Natural killer cell (primary cell): ENCODE measurements at regions of chr20 and their contacts with region 1.

Region 1: DNA sequence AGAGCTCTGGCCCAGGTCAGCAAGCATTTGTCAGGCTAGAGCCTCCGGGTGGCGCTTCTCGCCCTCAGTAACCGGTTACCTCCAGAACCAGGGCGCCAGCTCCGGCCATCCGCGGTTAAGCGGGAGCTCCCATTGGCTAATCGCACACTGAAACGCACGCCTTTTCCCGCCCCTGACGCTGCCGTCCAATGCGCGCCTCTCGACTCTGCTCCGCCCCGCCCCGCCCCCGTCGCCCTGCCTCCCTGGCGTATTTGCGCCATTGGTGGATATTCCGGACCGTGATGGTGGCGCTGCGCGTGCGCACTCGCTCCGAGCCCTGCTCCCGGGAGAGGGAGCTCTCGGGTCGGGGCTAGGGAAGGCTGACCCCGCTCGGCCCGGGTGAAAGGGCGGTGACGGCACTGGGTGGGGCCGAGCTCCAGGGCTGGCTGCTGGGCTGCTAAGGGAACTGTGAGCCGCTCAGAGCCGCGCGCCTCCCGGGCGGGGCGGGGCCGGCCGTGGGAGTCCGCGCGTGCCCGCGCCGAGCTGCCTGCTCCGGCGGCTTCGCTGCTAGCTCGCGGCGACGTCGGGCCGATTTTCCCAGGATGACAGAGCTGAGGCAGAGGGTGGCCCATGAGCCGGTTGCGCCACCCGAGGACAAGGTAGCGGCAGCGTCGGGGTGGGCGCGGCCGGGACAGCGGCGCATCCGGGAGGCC is at the start of gene CDS2:
- DNase-seq: peak; percentile 98 to 100
- ATAC-seq: peak; percentile 83 to 96 (median 86)
- H3K4me3 ChIP-seq: peak within 1 kb of the TSS; percentile 61
- H3K4me3 Mint-ChIP-seq: peak within 1 kb of the TSS; percentile 92
- H3K27ac ChIP-seq: peak within 1 kb of the TSS; percentile 93
- H3K27ac Mint-ChIP-seq: peak within 1 kb of the TSS; percentile 86 to 98
- H3K4me1 ChIP-seq: peaks cover 22% of the 10 kb centered on the region
- H3K4me1 Mint-ChIP-seq: peaks cover 27 to 31% of the 10 kb centered on the region in 2 donors
- H3K27me3 ChIP-seq: no peaks in the 10 kb centered on the region
- H3K27me3 Mint-ChIP-seq: no peaks in the 10 kb centered on the region
- CTCF ChIP-seq: peak; percentile 46
- total RNA-seq, gene CDS2: 45.6 to 54.7 (median 53.8) TPM

Region 2: DNA sequence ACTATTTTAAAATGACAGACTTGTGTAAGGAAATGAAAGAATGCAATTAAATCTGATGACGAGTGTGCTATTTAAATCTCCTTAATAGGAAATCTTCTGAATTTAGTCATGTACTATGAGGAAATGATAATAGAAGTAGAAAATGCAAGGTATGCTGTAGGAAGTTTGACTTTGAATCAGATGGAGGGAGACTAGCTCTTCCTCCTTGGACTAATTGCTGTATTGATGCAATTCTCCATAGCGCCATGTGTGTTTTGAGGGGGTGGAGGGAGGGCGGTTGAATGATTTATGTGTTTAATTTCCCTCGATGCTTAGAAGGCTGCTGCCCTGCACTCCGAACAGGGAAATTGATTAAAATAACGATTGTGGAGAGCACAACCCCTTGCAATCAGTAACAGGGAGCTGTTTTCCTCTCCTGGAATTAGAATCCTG is 619.4 kb before region 1 on chr20:
- intact Hi-C with region 1: no loop called
- DNase-seq: no peak
- ATAC-seq: no peak
- H3K4me3 ChIP-seq: no peak overlapping the region
- H3K4me3 Mint-ChIP-seq: no peak overlapping the region
- H3K27ac ChIP-seq: no peak overlapping the region
- H3K27ac Mint-ChIP-seq: no peak overlapping the region
- H3K4me1 ChIP-seq: no peaks in the 10 kb centered on the region
- H3K4me1 Mint-ChIP-seq: no peaks in the 10 kb centered on the region
- H3K27me3 ChIP-seq: no peaks in the 10 kb centered on the region
- H3K27me3 Mint-ChIP-seq: peaks cover 15 to 46% of the 10 kb centered on the region in 2 donors
- CTCF ChIP-seq: no peak

Region 3: GRCh38 chr20:5078399-5078958 is 48.2 kb before region 1 on chr20:
- intact Hi-C with region 1: loop called (anchors 5 kb)
- DNase-seq: peak; percentile 72 to 89
- ATAC-seq: peak; percentile 89 to 96 (median 96)
- H3K4me3 ChIP-seq: peak overlapping the region; percentile 22
- H3K4me3 Mint-ChIP-seq: peak overlapping the region; percentile 79
- H3K27ac ChIP-seq: peak overlapping the region; percentile 94
- H3K27ac Mint-ChIP-seq: peak overlapping the region; percentile 97 to 98
- H3K4me1 ChIP-seq: peaks cover 46% of the 10 kb centered on the region
- H3K4me1 Mint-ChIP-seq: peaks cover 36 to 38% of the 10 kb centered on the region in 2 donors
- H3K27me3 ChIP-seq: no peaks in the 10 kb centered on the region
- H3K27me3 Mint-ChIP-seq: no peaks in the 10 kb centered on the region
- CTCF ChIP-seq: no peak

Region 4: DNA sequence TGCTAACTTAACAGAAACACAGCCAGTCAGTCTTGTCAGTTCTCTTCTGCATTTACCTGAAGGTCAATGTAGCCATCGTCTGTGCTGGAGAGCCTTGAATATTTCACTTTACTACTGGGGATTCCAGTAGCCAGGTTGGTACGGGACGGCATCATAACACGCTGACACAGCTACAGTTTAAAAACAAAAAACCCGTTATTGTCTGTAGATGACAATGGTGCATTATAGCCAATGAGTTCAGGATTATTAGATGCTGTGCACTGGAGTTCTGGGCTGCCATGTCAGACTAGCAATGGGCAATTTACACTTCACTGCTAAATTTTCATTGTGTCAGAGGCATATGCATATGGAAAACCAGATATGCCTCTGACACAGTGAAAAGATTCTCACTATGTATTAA is 17.4 kb before region 1 on chr20:
- intact Hi-C with region 1: no loop called
- DNase-seq: no peak
- ATAC-seq: no peak
- H3K4me3 ChIP-seq: no peak overlapping the region
- H3K4me3 Mint-ChIP-seq: no peak overlapping the region
- H3K27ac ChIP-seq: no peak overlapping the region
- H3K27ac Mint-ChIP-seq: no peak overlapping the region
- H3K4me1 ChIP-seq: peaks cover 11% of the 10 kb centered on the region
- H3K4me1 Mint-ChIP-seq: peaks cover 9 to 13% of the 10 kb centered on the region in 2 donors
- H3K27me3 ChIP-seq: no peaks in the 10 kb centered on the region
- H3K27me3 Mint-ChIP-seq: no peaks in the 10 kb centered on the region
- CTCF ChIP-seq: no peak

Region 5: DNA sequence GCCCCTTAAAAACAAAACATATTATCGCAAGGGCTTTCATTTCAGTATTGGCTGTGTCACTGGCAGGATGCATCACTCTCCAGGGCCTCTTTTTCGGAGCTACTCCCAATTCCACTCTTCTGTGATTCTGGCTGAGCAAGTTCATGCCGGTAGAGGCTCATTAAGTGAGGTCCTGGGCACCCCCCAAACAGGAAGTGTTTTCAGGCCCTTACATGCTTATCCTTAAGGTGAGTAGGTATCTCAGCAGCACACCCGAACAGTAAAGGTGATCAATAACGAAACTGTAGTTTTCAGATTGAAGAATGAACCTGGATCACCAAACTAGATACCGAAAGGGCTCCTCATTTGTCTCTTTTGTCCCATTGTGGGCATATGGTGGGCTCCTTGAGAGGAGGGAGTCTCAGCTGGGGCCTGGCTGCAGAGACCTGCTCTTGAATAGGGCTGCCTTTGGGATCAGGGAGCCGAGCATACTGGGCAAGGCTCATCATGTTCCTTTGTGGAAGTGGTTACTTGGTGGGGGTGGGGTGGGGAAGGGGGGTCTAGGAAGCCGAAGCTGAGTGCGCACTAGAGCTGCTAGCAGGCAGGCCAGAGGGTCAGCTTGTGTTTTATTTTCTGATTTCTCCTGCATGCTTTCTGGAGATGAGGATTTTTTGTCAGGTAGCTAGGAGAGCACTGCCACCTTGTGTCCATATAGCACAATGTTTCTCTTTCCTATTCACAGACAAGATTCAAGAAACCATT is 65.3 kb after region 1 on chr20:
- intact Hi-C with region 1: loop called (anchors 1 kb)
- DNase-seq: peak in 1 of 2 donors; percentile 80
- ATAC-seq: peak; percentile 72 to 97 (median 81)
- H3K4me3 ChIP-seq: no peak overlapping the region
- H3K4me3 Mint-ChIP-seq: no peak overlapping the region
- H3K27ac ChIP-seq: no peak overlapping the region
- H3K27ac Mint-ChIP-seq: peak overlapping the region in 1 of 2 donors; percentile 47
- H3K4me1 ChIP-seq: no peaks in the 10 kb centered on the region
- H3K4me1 Mint-ChIP-seq: peaks cover 6 to 9% of the 10 kb centered on the region in 2 donors
- H3K27me3 ChIP-seq: no peaks in the 10 kb centered on the region
- H3K27me3 Mint-ChIP-seq: no peaks in the 10 kb centered on the region
- CTCF ChIP-seq: peak; percentile 67